ENCODE measurements at regions of chr2 and their contacts with region 1.

Region 1: GRCh38 chr2:10427618-10427949 is 20.5 kb downstream of the ODC1 start:
- DNase-seq: no peak
- ATAC-seq: no peak

Region 2: DNA sequence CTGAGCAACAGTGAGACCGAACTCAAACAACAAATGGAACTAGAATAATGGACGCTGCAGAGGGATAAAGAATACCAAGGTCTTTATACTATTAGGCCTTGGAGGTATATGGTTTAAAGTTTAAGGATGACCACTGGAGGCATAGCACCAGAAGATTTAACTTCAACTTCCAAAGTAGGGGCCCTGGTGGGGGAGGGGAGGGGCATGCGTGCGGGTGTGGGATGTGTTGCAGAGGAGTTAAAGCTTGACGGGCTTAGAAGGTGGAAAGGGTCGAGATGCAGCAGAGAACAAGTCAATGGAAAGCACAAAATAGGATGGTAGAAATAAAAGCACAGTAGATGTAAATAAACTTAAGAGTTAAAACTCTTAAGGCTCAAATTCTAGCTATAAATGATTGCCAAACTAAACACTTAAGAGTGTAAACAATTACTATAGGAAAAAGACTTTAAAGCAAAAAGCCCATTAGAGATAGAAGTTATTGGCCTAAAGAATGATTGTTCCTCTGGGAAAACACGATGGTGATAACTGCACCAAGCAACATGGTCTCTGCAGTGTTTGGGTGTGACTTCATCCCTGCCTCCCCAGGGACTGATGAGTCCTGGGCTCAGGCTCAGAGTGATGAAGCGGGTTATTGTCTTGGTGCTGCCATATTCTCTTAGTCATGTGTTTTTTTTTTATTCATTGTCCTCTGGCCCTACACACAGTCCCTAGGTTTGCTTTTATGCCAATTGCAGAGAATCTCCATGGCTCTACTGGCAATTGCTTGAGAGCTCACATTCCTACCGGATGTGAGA is 292.1 kb before region 1 on chr2:
- intact Hi-C with region 1: loop called (anchors 5 kb)
- DNase-seq: no peak
- ATAC-seq: no peak